MCF 10A (cell line): ENCODE measurements at regions of chr6 and their contacts with region 1.

Region 1: DNA sequence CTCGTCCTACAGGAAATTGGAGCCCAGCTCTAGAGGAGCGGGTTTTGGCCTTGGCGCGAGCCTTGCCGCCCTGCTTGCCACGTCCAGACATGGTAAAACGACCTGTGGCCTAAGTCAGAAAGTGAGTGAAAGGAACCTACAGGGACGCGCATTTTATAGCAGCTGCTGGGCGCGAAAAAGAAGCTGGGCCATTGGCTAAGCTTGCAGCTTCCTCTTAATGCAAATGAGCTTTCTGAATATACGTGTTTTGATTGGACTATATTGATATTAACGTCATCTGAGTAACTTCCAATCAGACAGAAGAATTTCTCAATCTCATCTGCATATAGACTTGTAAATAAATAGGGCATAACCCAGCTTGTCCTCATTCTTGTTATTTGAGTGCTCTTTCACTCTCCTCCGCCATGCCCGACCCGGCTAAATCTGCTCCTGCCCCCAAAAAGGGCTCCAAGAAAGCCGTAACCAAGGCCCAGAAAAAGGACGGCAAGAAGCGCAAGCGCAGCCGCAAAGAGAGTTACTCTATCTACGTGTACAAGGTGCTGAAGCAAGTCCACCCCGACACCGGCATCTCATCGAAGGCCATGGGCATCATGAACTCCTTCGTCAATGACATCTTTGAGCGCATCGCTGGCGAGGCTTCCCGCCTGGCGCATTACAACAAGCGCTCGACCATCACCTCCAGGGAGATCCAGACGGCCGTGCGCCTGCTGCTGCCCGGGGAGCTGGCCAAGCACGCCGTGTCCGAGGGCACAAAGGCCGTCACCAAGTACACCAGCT is 18.9 kb downstream of the OR2B2 start:
- DNase-seq: peak; percentile 98
- H3K4me3 Mint-ChIP-seq: no peak overlapping the region
- H3K27ac Mint-ChIP-seq: no peak overlapping the region
- H3K4me1 Mint-ChIP-seq: peaks cover 12% of the 10 kb centered on the region
- H3K27me3 Mint-ChIP-seq: no peaks in the 10 kb centered on the region
- CTCF ChIP-seq: no peak

Region 2: DNA sequence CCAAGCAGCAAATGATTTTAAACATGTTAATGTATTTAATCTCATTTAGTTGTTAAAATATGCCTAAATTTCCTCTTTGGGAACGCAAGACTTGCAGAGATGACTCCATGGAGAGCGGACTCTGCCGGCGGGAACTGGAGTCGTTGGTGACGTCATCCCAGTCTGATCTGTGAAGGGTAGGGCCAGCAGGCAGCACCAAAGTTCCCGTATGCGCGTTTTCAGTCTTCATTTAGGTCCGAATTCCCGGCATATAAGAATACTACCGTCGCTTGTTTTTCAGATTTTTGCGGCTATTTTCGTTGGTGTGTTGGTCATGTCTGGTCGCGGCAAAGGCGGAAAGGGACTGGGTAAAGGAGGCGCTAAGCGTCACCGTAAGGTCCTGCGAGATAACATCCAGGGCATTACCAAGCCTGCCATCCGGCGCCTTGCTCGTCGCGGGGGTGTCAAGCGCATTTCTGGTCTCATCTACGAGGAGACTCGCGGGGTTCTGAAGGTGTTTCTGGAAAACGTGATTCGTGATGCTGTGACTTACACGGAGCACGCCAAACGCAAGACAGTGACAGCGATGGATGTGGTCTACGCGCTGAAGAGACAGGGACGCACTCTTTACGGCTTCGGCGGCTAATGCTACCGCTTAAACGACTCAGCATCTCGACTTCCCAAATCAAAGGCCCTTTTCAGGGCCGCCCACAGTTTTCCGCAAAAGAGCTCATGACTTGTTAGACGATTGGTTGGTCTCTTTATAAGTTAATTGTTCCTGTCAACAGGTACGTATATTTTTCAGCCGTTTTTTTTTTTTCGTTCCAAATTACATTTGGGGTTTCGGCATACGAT is 1688.7 kb before region 1 on chr6:
- CTCF ChIA-PET with region 1: no interaction called
- POLR2A ChIA-PET with region 1: interaction called, 83 read pairs
- intact Hi-C with region 1: no loop called
- DNase-seq: peak; percentile 98
- H3K4me3 Mint-ChIP-seq: no peak overlapping the region
- H3K27ac Mint-ChIP-seq: no peak overlapping the region
- H3K4me1 Mint-ChIP-seq: peaks cover 3% of the 10 kb centered on the region
- H3K27me3 Mint-ChIP-seq: no peaks in the 10 kb centered on the region
- CTCF ChIP-seq: no peak

Region 3: GRCh38 chr6:27157459-27158315 is 735.6 kb before region 1 on chr6:
- CTCF ChIA-PET with region 1: interaction called, 14 read pairs
- POLR2A ChIA-PET with region 1: interaction called, 5 read pairs
- intact Hi-C with region 1: no loop called
- DNase-seq: peak; percentile 66
- H3K4me3 Mint-ChIP-seq: peak overlapping the region; percentile 80
- H3K27ac Mint-ChIP-seq: peak overlapping the region; percentile 53
- H3K4me1 Mint-ChIP-seq: peaks cover 29% of the 10 kb centered on the region
- H3K27me3 Mint-ChIP-seq: no peaks in the 10 kb centered on the region
- CTCF ChIP-seq: peak; percentile 31

Region 4: DNA sequence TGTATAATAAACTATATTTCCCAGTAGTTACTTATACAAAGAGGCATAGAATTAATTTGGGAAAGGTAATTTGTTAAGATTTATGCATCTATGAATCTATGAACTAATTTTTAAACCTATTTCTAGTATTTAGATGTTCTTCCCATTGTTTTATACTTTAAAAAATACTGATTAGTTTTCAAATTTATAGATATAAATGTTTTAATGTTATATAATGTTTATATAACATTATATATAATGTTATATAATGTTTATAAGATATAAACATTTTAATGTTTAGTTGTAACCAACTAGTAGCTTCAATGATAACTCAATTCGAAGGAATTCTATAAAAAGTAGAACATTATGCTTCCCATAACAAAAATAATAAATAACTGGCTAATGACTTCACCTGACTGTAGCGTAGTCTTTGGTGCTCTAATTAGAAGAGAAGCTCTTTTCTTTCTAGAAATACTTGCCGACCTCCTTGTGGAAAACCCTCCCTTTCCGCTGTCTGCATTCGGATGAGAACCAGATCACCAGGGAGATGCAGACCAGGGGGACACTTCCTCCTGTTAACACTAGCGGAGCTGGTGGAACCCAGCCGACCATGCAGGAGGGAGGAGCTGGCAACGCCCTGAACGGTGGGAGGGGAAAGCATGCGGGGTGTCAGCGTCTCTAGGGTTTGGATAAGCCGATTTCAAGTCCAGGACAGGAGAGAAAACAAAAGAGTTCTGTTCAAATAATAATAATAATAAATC is 139.4 kb before region 1 on chr6:
- CTCF ChIA-PET with region 1: interaction called, 4 read pairs
- POLR2A ChIA-PET with region 1: interaction called, 13 read pairs
- intact Hi-C with region 1: no loop called
- DNase-seq: peak; percentile 93
- H3K4me3 Mint-ChIP-seq: peak overlapping the region; percentile 80
- H3K27ac Mint-ChIP-seq: peak overlapping the region; percentile 59
- H3K4me1 Mint-ChIP-seq: peaks cover 11% of the 10 kb centered on the region
- H3K27me3 Mint-ChIP-seq: no peaks in the 10 kb centered on the region
- CTCF ChIP-seq: no peak

Region 5: GRCh38 chr6:27809939-27810767 is 83.1 kb before region 1 on chr6:
- CTCF ChIA-PET with region 1: interaction called, 10 read pairs
- POLR2A ChIA-PET with region 1: interaction called, 449 read pairs
- intact Hi-C with region 1: loop called (anchors 2 kb)
- DNase-seq: peak; percentile 96
- H3K4me3 Mint-ChIP-seq: peak overlapping the region; percentile 86
- H3K27ac Mint-ChIP-seq: peak overlapping the region; percentile 94
- H3K4me1 Mint-ChIP-seq: peaks cover 20% of the 10 kb centered on the region
- H3K27me3 Mint-ChIP-seq: no peaks in the 10 kb centered on the region
- CTCF ChIP-seq: no peak

Region 6: GRCh38 chr6:27847706-27848105 is 45.5 kb before region 1 on chr6:
- CTCF ChIA-PET with region 1: interaction called, 3 read pairs
- POLR2A ChIA-PET with region 1: interaction called, 10 read pairs
- intact Hi-C with region 1: no loop called
- DNase-seq: no peak
- H3K4me3 Mint-ChIP-seq: no peak overlapping the region
- H3K27ac Mint-ChIP-seq: no peak overlapping the region
- H3K4me1 Mint-ChIP-seq: no peaks in the 10 kb centered on the region
- H3K27me3 Mint-ChIP-seq: no peaks in the 10 kb centered on the region
- CTCF ChIP-seq: no peak

Region 7: DNA sequence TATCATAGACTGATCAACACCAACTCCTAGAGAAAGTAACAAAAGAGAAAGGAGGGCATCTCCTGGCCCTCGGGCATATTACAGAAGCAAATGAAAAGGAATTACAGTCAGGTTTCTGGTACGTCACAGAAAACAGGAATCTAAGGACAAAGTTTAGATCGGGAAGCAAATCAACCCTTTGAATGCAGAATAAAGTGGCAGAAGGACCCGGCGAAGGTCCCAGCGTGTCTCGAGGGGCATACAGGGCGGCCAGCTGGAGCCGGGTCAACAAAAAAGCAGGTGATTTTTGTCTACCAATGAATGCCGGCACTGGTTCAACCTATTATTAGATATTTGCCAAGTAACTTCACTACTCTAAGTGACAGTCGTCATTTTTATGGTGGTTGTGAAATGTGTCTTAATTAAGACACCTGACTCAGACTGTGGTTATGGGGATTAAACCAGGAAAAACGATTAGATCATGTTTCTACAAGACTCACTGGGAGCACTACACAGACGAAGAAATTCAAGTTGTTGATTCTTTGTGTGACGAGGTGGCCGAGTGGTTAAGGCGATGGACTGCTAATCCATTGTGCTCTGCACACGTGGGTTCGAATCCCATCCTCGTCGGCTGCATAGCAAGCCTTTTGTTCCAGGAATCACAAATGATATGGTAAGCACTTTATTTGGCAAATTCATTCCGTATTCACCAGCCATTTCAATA is 319.4 kb after region 1 on chr6:
- CTCF ChIA-PET with region 1: no interaction called
- POLR2A ChIA-PET with region 1: no interaction called
- intact Hi-C with region 1: loop called (anchors 2 kb)
- DNase-seq: peak; percentile 90
- H3K4me3 Mint-ChIP-seq: peak overlapping the region; percentile 72
- H3K27ac Mint-ChIP-seq: peak overlapping the region; percentile 85
- H3K4me1 Mint-ChIP-seq: peaks cover 14% of the 10 kb centered on the region
- H3K27me3 Mint-ChIP-seq: no peaks in the 10 kb centered on the region
- CTCF ChIP-seq: no peak